Activated CD8-positive, alpha-beta T cell treated with anti-CD3 and anti-CD28 coated beads for 36 hours (primary cell): ENCODE measurements at regions of chr14 and their contacts with region 1.

Region 1: DNA sequence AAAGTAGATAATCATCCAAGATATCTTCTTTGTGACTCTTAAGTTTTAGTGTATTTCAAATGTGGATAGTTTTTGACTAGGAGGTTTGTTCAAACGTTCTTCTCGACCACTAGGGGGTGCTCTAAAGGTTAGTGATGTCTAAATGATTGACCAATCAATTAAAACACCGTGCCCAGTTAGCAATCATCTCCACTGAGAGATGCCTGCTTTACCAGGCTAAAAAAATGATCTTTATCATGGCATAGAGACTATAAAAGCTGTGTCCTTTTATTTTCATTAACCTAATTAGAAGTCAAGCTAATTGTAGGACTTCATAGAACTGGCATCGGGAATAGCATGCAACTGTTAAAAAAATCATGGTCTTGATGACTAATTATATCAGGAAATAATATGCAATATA is 153.9 kb downstream of the PRKCH start:
- DNase-seq: no peak
- ATAC-seq: no peak
- H3K4me3 Mint-ChIP-seq: peak overlapping the region; percentile 47
- H3K27ac Mint-ChIP-seq: peak overlapping the region; percentile 92
- H3K4me1 Mint-ChIP-seq: peaks cover 91% of the 10 kb centered on the region
- H3K27me3 Mint-ChIP-seq: no peaks in the 10 kb centered on the region
- CTCF ChIP-seq: peak; percentile 86

Region 2: DNA sequence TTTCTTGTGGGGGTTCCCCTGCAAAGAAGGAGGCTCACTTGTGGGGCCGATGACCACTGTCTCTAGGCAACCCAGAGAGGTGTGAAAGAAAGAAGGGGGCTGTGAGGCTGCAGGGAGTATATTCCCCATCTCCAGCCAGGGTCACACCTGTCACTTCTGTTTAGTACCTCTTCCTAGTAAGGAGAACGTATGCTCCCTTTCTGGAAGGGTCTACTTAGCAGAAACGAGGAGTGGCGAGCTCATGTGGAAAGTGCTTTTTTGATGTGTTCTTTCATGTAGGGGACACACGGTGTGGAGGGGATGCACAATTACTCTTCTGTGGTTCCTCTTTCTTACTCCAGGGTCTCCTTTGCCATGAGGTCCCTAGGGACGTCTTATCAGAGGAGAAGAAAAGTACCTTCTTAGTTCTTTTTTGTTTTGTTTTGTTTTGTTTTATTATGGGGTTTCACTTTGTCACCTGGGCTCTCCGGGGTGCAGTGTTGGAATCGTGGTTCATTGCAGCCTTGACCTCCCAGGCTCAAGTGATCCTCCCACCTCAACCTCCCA is 95.6 kb before region 1 on chr14:
- CTCF ChIA-PET with region 1: no interaction called
- POLR2A ChIA-PET with region 1: no interaction called
- intact Hi-C with region 1: no loop called
- DNase-seq: peak; percentile 69
- ATAC-seq: peak; percentile 75
- H3K4me3 Mint-ChIP-seq: peak overlapping the region; percentile 54
- H3K27ac Mint-ChIP-seq: peak overlapping the region; percentile 83
- H3K4me1 Mint-ChIP-seq: peaks cover 80% of the 10 kb centered on the region
- H3K27me3 Mint-ChIP-seq: no peaks in the 10 kb centered on the region
- CTCF ChIP-seq: no peak

Region 3: DNA sequence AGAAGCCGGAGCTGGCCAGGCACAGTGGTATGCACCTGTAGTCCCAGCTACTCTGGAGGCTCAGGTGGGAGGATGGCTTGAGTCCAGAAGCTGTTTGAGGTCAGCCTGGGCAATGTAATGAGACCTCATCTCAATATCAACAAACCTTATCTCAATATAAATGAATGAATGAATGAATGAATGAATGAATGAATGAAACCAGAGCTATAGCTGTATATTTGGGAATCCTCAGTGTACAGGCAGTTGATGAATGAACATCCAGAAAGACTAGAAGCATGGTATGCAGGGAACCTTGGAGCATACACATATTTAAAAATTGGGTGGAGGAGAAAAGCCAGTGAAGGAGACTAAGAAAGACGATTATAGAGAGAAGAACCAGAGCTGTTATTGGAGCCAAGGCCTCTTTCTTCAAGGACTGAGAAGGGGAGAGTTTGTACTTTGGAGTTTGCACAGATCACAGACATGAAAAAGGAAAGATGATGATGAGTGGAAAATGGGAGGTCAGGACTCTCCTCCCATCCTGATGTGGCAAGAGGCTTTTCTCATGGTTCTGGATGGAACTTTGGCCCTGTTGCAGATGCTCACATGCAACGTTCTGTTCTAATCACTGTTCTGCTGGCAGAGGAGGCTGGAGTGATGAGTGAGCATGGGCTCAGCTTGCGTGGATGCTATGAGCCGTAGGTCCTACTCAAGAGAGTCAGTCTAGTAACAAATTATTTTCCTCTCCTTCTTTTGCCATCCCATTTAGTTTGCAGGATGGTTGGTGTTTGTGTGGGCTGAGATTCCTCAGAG is 39.6 kb before region 1 on chr14:
- CTCF ChIA-PET with region 1: no interaction called
- POLR2A ChIA-PET with region 1: no interaction called
- intact Hi-C with region 1: no loop called
- DNase-seq: no peak
- ATAC-seq: no peak
- H3K4me3 Mint-ChIP-seq: no peak overlapping the region
- H3K27ac Mint-ChIP-seq: peak overlapping the region; percentile 90
- H3K4me1 Mint-ChIP-seq: peaks cover 93% of the 10 kb centered on the region
- H3K27me3 Mint-ChIP-seq: no peaks in the 10 kb centered on the region
- CTCF ChIP-seq: no peak

Region 4: GRCh38 chr14:61493239-61493638 is 17.9 kb after region 1 on chr14:
- CTCF ChIA-PET with region 1: interaction called, 94 read pairs
- POLR2A ChIA-PET with region 1: interaction called, 100 read pairs
- intact Hi-C with region 1: no loop called
- DNase-seq: no peak
- ATAC-seq: no peak
- H3K4me3 Mint-ChIP-seq: no peak overlapping the region
- H3K27ac Mint-ChIP-seq: no peak overlapping the region
- H3K4me1 Mint-ChIP-seq: peaks cover 53% of the 10 kb centered on the region
- H3K27me3 Mint-ChIP-seq: no peaks in the 10 kb centered on the region
- CTCF ChIP-seq: no peak

Region 5: GRCh38 chr14:61512026-61512834 is 36.9 kb after region 1 on chr14:
- CTCF ChIA-PET with region 1: interaction called, 9 read pairs
- POLR2A ChIA-PET with region 1: interaction called, 16 read pairs
- intact Hi-C with region 1: no loop called
- DNase-seq: no peak
- ATAC-seq: peak; percentile 50
- H3K4me3 Mint-ChIP-seq: peak overlapping the region; percentile 52
- H3K27ac Mint-ChIP-seq: peak overlapping the region; percentile 93
- H3K4me1 Mint-ChIP-seq: peaks cover 94% of the 10 kb centered on the region
- H3K27me3 Mint-ChIP-seq: no peaks in the 10 kb centered on the region
- CTCF ChIP-seq: no peak

Region 6: GRCh38 chr14:61568572-61569131 is 93.3 kb after region 1 on chr14:
- CTCF ChIA-PET with region 1: interaction called, 10 read pairs
- POLR2A ChIA-PET with region 1: interaction called, 5 read pairs
- intact Hi-C with region 1: loop called (anchors 5 kb)
- DNase-seq: peak; percentile 72
- ATAC-seq: peak; percentile 56
- H3K4me3 Mint-ChIP-seq: peak overlapping the region; percentile 52
- H3K27ac Mint-ChIP-seq: peak overlapping the region; percentile 78
- H3K4me1 Mint-ChIP-seq: peaks cover 69% of the 10 kb centered on the region
- H3K27me3 Mint-ChIP-seq: no peaks in the 10 kb centered on the region
- CTCF ChIP-seq: no peak

Region 7: GRCh38 chr14:61662437-61663311 is 187.4 kb after region 1 on chr14:
- CTCF ChIA-PET with region 1: interaction called, 7 read pairs
- POLR2A ChIA-PET with region 1: interaction called, 4 read pairs
- intact Hi-C with region 1: loop called (anchors 2 kb)
- DNase-seq: peak; percentile 81
- ATAC-seq: peak; percentile 85
- H3K4me3 Mint-ChIP-seq: peak overlapping the region; percentile 51
- H3K27ac Mint-ChIP-seq: peak overlapping the region; percentile 97
- H3K4me1 Mint-ChIP-seq: peaks cover 61% of the 10 kb centered on the region
- H3K27me3 Mint-ChIP-seq: no peaks in the 10 kb centered on the region
- CTCF ChIP-seq: no peak

Region 8: GRCh38 chr14:61719344-61720293 is 244.3 kb after region 1 on chr14:
- CTCF ChIA-PET with region 1: interaction called, 10 read pairs
- POLR2A ChIA-PET with region 1: interaction called, 3 read pairs
- intact Hi-C with region 1: no loop called
- DNase-seq: no peak
- ATAC-seq: peak; percentile 72
- H3K4me3 Mint-ChIP-seq: peak overlapping the region; percentile 48
- H3K27ac Mint-ChIP-seq: peak overlapping the region; percentile 77
- H3K4me1 Mint-ChIP-seq: peaks cover 78% of the 10 kb centered on the region
- H3K27me3 Mint-ChIP-seq: no peaks in the 10 kb centered on the region
- CTCF ChIP-seq: no peak